Mammary epithelial cell (primary cell): ENCODE measurements at regions of chr12 and their contacts with region 1.

Region 1: DNA sequence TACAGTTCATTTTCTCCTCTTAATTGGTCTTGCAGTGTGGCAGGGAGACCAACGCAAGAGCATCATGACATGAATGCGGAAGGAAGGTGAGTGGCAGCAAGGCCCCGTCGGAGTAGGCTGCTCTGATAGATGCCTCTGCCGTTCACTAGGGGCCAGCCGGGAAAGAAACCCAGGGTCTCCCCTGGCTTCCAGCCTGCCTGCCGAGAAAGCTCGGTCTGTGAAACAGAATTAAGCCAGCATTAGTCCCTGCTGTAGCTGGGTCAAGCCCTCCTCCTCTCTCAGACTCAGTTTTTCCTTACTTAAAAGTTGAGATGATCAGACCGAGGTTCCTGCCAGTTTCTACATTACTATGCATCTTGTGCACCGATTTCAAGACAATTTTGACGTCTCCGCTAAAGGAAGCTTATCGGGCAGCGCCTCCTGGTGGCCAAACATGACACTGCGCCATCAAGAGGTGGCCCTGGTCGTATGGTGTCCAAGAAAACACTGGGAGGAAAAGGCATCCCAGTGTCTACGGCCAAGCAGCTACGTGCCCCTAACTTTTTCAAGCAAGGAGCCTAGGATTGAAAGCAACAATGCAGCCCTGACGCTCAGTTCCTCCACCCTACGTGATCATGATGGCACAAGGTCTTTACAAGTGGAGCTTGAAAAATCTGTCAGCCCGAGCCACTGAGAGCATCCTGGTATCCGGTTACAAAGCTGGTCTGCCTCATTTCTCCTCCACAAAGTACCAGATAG is 131.6 kb downstream of the KSR2 start:
- DNase-seq: peak; percentile 39
- H3K4me3 ChIP-seq: no peak overlapping the region
- H3K27ac ChIP-seq: no peak overlapping the region
- H3K4me1 ChIP-seq: no peaks in the 10 kb centered on the region
- H3K27me3 ChIP-seq: no peaks in the 10 kb centered on the region
- CTCF ChIP-seq: peak; percentile 94

Region 2: DNA sequence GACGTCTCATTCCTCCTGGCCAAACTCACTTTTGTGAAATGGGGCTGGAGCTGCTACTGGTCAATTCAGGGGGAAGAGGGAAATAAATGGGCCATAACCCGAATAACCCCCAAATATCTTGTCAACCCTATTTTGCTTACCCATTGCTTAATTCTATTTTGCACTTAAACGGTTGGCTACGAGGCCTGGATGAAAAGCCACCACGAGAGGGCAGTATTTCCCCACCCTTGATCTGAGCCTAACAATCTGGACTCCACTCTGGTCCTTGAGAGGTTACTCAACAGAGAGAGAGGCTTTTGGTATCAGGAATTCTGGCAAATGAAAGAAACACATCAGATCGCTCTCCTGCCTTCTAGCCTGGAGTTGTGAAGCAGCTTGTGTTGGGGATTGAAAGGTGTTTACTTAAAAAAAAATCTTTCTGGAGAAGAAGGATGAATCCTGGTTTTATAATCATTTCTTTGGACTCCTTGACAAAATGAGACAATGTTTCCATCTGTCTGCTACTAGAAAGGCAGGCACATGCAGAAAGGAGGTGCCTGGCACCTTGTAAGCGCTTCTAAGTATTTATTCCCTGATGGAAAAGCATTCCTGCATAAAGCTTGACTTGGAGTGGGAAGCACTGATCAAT is 624.5 kb before region 1 on chr12:
- CTCF ChIA-PET with region 1: no interaction called
- dilution Hi-C with region 1: no loop called
- in situ Hi-C with region 1: loop called (anchors 10 to 25 kb)
- intact Hi-C with region 1: loop called (anchors 1 kb)
- DNase-seq: peak; percentile 55
- H3K4me3 ChIP-seq: no peak overlapping the region
- H3K27ac ChIP-seq: no peak overlapping the region
- H3K4me1 ChIP-seq: no peaks in the 10 kb centered on the region
- H3K27me3 ChIP-seq: peaks cover 2% of the 10 kb centered on the region
- CTCF ChIP-seq: peak; percentile 85 to 88

Region 3: GRCh38 chr12:117236456-117237001 is 600.6 kb before region 1 on chr12:
- CTCF ChIA-PET with region 1: no interaction called
- dilution Hi-C with region 1: no loop called
- in situ Hi-C with region 1: no loop called
- intact Hi-C with region 1: loop called (anchors 1 kb)
- DNase-seq: peak; percentile 19
- H3K4me3 ChIP-seq: no peak overlapping the region
- H3K27ac ChIP-seq: no peak overlapping the region
- H3K4me1 ChIP-seq: no peaks in the 10 kb centered on the region
- H3K27me3 ChIP-seq: no peaks in the 10 kb centered on the region
- CTCF ChIP-seq: peak; percentile 46 to 57

Region 4: DNA sequence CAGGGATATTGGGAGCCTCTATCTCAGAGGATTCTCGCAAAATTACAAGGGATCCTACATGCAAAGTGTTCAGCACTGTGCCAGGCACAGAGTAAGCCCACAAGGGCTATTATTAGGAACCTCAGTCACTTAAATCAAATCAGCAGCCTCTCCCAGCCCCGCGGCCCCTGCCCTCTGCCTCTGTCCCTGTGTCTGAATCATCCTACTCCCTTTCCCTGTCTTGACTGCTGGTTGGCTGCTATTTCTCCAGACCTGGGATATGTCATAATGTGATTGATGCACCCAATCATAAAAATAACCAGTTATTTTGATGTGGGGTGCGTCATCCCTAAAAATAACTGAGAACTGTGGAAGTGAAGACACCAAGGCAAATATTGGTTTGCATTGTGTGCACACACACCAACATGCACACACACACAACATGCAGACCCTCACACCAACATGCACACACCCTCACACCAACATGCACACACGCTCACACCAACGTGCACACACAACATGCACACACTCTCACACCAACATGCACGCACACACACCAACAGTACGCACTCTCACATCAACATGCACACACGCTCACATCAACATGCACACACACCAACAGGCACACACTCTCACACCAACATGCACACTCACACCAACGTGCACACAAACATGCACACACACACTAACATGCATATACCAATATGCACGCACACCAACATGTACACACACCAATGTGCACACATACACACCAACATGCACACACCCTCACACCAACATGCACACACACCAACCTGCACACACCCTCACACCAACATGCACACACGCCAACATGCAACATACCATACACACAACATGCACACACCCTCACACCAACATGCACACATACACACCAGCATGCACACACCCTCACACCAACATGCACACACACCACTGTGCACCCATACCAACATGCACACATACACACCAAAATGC is 44.4 kb before region 1 on chr12:
- CTCF ChIA-PET with region 1: no interaction called
- dilution Hi-C with region 1: loop called (anchors 5 kb)
- in situ Hi-C with region 1: no loop called
- intact Hi-C with region 1: no loop called
- DNase-seq: no peak
- H3K4me3 ChIP-seq: no peak overlapping the region
- H3K27ac ChIP-seq: no peak overlapping the region
- H3K4me1 ChIP-seq: no peaks in the 10 kb centered on the region
- H3K27me3 ChIP-seq: no peaks in the 10 kb centered on the region
- CTCF ChIP-seq: no peak

Region 5: GRCh38 chr12:118526255-118527095 is 689.3 kb after region 1 on chr12:
- CTCF ChIA-PET with region 1: no interaction called
- dilution Hi-C with region 1: no loop called
- in situ Hi-C with region 1: no loop called
- intact Hi-C with region 1: no loop called
- DNase-seq: no peak
- H3K4me3 ChIP-seq: no peak overlapping the region
- H3K27ac ChIP-seq: no peak overlapping the region
- H3K4me1 ChIP-seq: no peaks in the 10 kb centered on the region
- H3K27me3 ChIP-seq: no peaks in the 10 kb centered on the region
- CTCF ChIP-seq: no peak